Psoas muscle (tissue), 8 donors: ENCODE measurements at regions of chr2 and their contacts with region 1.

Region 1: GRCh38 chr2:69914170-69914960 is 544 bp upstream of the MXD1 start:
- DNase-seq: peak; percentile 100
- ATAC-seq: peak; percentile 88 to 94 (median 91)
- H3K4me3 ChIP-seq: peak overlapping the region; percentile 77
- H3K27ac ChIP-seq: peak overlapping the region; percentile 98
- H3K4me1 ChIP-seq: peaks cover 38% of the 10 kb centered on the region
- H3K27me3 ChIP-seq: no peaks in the 10 kb centered on the region
- CTCF ChIP-seq: no peak

Region 2: DNA sequence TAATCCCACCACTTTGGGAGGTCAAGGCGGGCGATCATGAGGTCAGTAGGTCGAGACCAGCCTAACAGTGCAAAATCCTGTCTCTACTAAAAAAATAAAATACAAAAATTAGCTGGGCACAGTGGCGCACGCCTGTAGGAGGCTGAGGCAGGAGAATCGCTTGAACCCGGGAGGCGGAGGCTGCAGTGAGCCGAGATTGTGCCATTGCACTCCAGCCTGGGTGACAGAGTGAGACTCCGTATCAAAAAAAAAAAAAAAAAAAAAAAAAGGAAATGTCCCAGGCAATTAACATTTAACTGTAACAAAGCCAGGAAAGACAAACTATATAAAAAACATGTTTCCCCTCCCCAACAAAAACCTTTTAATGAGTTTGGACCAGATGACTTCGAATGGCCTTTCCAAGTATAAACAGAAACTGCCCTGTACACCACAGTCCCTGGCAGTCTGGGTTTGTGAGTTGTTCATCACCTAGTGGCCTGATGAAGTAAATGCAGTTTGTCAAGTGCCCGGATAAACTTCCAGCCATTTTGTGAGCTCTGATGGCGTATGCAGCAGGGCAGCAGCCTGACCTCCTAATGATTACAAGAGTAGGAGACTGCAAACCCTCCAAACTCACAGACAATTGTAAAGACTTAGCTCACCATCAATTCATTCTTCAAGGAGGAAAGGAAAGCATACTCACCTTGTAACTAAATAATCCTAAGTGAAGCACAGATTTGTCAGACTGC is 156.3 kb after region 1 on chr2:
- intact Hi-C with region 1: loop called (anchors 5 kb)
- DNase-seq: peak; percentile 33 to 63
- ATAC-seq: peak; percentile 84 to 91 (median 90)
- H3K4me3 ChIP-seq: peak overlapping the region; percentile 27
- H3K27ac ChIP-seq: peak overlapping the region; percentile 83
- H3K4me1 ChIP-seq: peaks cover 28% of the 10 kb centered on the region
- H3K27me3 ChIP-seq: no peaks in the 10 kb centered on the region
- CTCF ChIP-seq: peak; percentile 79

Region 3: GRCh38 chr2:70086838-70087701 is 172.7 kb after region 1 on chr2 and contains the start of gene PCBP1:
- intact Hi-C with region 1: loop called (anchors 1 to 5 kb)
- DNase-seq: peak; percentile 98 to 99
- ATAC-seq: peak; percentile 79 to 85 (median 83)
- H3K4me3 ChIP-seq: peak within 1 kb of the TSS; percentile 96
- H3K27ac ChIP-seq: peak within 1 kb of the TSS; percentile 100
- H3K4me1 ChIP-seq: peaks cover 29% of the 10 kb centered on the region
- H3K27me3 ChIP-seq: no peaks in the 10 kb centered on the region
- CTCF ChIP-seq: no peak
- total RNA-seq, gene PCBP1: 423 to 683 (median 522) TPM

Region 4: GRCh38 chr2:70142590-70143313 is 228.4 kb after region 1 on chr2:
- intact Hi-C with region 1: loop called (anchors 1 to 2 kb)
- DNase-seq: peak; percentile 100
- ATAC-seq: peak; percentile 81 to 87 (median 81)
- H3K4me3 ChIP-seq: peak overlapping the region; percentile 72
- H3K27ac ChIP-seq: peak overlapping the region; percentile 98
- H3K4me1 ChIP-seq: peaks cover 18% of the 10 kb centered on the region
- H3K27me3 ChIP-seq: no peaks in the 10 kb centered on the region
- CTCF ChIP-seq: peak; percentile 97

Region 5: GRCh38 chr2:70190418-70191243 is 276.3 kb after region 1 on chr2 and contains the start of gene C2orf42:
- intact Hi-C with region 1: loop called (anchors 5 kb)
- DNase-seq: peak; percentile 96 to 98
- ATAC-seq: peak; percentile 97 to 99 (median 98)
- H3K4me3 ChIP-seq: peak within 1 kb of the TSS; percentile 80
- H3K27ac ChIP-seq: peak within 1 kb of the TSS; percentile 87
- H3K4me1 ChIP-seq: no peaks in the 10 kb centered on the region
- H3K27me3 ChIP-seq: no peaks in the 10 kb centered on the region
- CTCF ChIP-seq: no peak
- total RNA-seq, gene C2orf42: 6.4 to 11.0 (median 9.2) TPM

Region 6: GRCh38 chr2:70301344-70302194 is 387.2 kb after region 1 on chr2 and contains the start of gene FAM136A:
- intact Hi-C with region 1: loop called (anchors 5 kb)
- DNase-seq: peak; percentile 89 to 93
- ATAC-seq: peak; percentile 95 to 98 (median 98)
- H3K4me3 ChIP-seq: peak within 1 kb of the TSS; percentile 100
- H3K27ac ChIP-seq: peak within 1 kb of the TSS; percentile 88
- H3K4me1 ChIP-seq: peaks cover 7% of the 10 kb centered on the region
- H3K27me3 ChIP-seq: no peaks in the 10 kb centered on the region
- CTCF ChIP-seq: peak; percentile 96
- total RNA-seq, gene FAM136A: 14.1 to 28.0 (median 19.2) TPM